ENCODE measurements at regions of chr16 and their contacts with region 1.

Region 1: GRCh38 chr16:85610508-85611332 is 2.4 kb upstream of the GSE1 start:
- DNase-seq: peak; percentile 84 to 89
- H3K4me3 ChIP-seq: peak overlapping the region; percentile 50 to 53
- H3K27ac ChIP-seq: peak overlapping the region; percentile 64 to 80
- H3K4me1 ChIP-seq: peaks cover 2 to 45% of the 10 kb centered on the region in 2 donors
- H3K27me3 ChIP-seq: no peaks in the 10 kb centered on the region
- CTCF ChIP-seq: peak; percentile 98 to 99 (median 98)
- POLR2A ChIP-seq: no peak

Region 2: DNA sequence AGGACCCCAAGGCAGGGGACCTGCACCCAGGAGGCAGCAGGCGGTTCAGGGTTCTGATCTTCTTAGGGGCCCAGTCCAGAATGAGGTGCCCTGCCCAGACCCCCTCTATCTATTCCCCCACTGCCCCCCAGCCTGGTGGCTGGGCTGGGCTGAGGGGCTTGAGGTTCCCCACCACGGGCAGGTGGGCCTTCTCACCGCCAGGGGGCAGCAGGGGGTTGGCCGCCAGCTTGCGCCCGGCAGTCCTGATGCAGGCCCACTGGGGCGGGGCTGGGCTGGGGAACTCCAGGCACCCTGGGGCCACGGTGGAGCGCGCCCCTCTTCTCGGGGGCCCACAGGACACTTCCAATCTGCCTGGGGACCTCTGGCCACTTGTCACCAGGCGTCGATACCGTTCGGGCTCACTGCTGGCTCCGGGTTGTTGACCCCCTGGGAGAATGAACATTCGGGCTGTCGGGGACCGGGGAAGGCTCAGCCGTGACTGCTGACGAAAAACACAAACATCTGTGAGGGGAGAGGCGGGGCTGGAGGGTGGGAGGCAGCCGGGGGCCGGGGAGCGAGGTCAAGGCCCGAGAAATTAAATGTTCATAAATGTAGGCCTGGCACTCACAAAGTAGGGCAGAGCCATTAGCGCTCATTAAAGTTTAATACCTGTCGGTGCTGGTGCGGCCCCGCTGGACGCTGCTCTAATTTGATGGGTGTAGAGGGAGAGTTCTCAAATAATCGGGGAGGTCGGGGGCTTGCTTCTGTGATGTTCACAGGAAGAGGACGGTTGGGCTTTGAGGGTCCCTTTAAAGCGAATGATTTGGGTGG is 216.8 kb before region 1 on chr16:
- intact Hi-C with region 1: loop called (anchors 10 kb)
- DNase-seq: peak; percentile 75 to 80
- H3K4me3 ChIP-seq: no peak overlapping the region
- H3K27ac ChIP-seq: peak overlapping the region; percentile 35 to 71
- H3K4me1 ChIP-seq: peaks cover 0 to 33% of the 10 kb centered on the region in 2 donors
- H3K27me3 ChIP-seq: no peaks in the 10 kb centered on the region
- CTCF ChIP-seq: peak; percentile 82 to 96 (median 92)
- POLR2A ChIP-seq: no peak

Region 3: DNA sequence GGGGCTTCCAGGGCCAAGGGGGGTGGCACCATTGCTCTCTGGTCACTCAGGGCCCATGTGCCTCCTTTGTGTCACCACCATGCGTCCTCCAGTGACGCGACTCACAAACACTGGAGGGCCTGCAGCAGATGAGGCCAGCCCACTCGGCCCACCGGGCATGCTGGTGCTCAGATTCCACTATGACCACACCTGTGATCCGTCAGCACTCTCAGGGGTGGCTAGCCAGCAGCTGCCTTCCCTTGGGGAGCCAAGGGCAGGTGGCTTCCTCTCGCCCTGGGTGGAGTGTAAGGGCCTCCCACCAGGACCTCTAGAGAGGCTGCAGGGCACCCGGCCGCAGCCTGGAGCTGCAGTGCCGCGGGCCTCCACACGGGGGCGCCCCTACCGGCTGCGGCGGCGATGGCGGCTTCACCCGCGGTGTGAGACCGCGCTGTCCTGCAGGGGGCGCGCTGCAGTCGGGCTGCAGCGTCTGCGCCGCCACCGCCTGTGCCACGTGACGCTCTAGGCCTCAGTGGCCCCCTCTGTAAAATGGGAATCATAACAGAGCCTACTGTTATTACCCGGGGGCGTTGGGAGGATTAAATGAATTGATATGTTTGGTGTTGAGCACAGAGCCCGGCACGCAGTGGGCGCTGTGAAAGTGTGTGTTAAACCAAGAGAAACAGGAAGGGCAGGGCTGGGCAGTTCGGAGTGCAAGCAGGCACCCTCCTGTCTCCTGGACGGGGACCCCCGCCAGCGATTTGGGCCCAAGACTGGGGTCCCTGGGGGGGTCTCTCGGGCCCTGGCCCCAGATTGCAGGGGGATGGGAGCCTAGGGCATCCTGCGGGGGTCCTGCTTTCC is 190.0 kb before region 1 on chr16:
- intact Hi-C with region 1: loop called (anchors 2 kb)
- DNase-seq: peak; percentile 35 to 59
- H3K4me3 ChIP-seq: no peak overlapping the region
- H3K27ac ChIP-seq: no peak overlapping the region
- H3K4me1 ChIP-seq: peaks cover 0 to 4% of the 10 kb centered on the region in 2 donors
- H3K27me3 ChIP-seq: no peaks in the 10 kb centered on the region
- CTCF ChIP-seq: peak; percentile 96 to 100 (median 98)
- POLR2A ChIP-seq: peak in 1 of 2 donors; percentile 25

Region 4: GRCh38 chr16:85528528-85529387 is 82.0 kb before region 1 on chr16:
- intact Hi-C with region 1: no loop called
- DNase-seq: no peak
- H3K4me3 ChIP-seq: no peak overlapping the region
- H3K27ac ChIP-seq: no peak overlapping the region
- H3K4me1 ChIP-seq: peaks cover 0 to 13% of the 10 kb centered on the region in 2 donors
- H3K27me3 ChIP-seq: no peaks in the 10 kb centered on the region
- CTCF ChIP-seq: peak in 2 of 4 experiments; percentile 14 to 23
- POLR2A ChIP-seq: no peak

Measured in uterus (tissue), 4 donors.